HepG2 (cell line): ENCODE measurements at regions of chr6 and their contacts with region 1.

Region 1: DNA sequence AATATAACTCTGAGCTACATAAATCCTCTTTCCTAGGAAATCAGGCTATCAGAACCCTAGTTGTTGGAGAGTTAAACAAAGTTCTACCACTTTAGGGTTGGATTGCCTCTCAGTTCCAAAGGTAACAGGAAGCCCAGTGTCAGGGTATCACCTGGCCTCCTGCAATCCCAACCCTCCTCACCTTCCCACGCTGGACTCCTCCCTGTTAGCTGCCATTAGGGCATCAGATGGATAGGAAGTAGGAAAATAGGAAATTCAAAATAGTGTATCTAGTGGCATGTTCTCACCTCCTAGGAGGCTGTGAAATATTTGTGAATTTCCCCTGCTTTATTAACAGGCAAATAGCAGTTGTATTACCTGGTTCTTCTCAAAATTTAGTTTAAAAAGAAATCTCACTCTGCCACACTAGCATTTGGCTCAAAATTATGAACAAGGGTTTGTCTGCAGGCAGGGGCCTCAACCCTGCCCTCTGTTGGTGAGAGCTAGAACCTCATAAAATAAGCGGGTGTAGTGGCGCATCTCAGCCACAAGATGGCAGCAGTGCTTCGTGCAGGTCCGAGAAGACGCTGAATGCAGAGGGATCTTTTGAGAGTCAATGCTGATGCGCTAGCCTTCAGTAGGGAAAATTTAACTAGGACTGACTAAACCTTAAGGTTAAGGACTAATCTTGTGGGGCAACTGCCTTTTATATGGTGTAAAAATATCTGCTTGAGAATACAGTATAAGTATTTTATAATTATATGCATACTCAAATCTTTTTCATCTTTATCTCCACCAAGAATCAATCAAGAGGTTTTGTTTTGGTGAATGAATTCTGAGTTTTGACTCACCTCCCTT is 209.8 kb upstream of the KCNQ5 start:
- DNase-seq: peak; percentile 44
- ATAC-seq: peak; percentile 45
- H3K4me3 ChIP-seq: no peak overlapping the region
- H3K27ac ChIP-seq: no peak overlapping the region
- H3K4me1 ChIP-seq: peaks cover 14% of the 10 kb centered on the region
- H3K27me3 ChIP-seq: no peaks in the 10 kb centered on the region
- CTCF ChIP-seq: peak; percentile 97
- EP300 ChIP-seq: no peak
- POLR2A ChIP-seq: no peak
- RAD21 ChIP-seq: peak; percentile 92

Region 2: GRCh38 chr6:70955441-70956190 is 1456.5 kb before region 1 on chr6:
- CTCF ChIA-PET with region 1: no interaction called
- POLR2A ChIA-PET with region 1: no interaction called
- in situ Hi-C with region 1: no loop called
- intact Hi-C with region 1: no loop called
- DNase-seq: peak; percentile 64
- ATAC-seq: peak; percentile 97
- H3K4me3 ChIP-seq: peak overlapping the region; percentile 41 to 66 (median 53)
- H3K27ac ChIP-seq: no peak overlapping the region
- H3K4me1 ChIP-seq: peaks cover 12% of the 10 kb centered on the region
- H3K27me3 ChIP-seq: peaks cover 0 to 36% of the 10 kb centered on the region in 2 experiments; a peak in 4 of 5 replicates
- CTCF ChIP-seq: peak; percentile 94
- EP300 ChIP-seq: no peak
- POLR2A ChIP-seq: no peak
- RAD21 ChIP-seq: peak; percentile 90

Region 3: DNA sequence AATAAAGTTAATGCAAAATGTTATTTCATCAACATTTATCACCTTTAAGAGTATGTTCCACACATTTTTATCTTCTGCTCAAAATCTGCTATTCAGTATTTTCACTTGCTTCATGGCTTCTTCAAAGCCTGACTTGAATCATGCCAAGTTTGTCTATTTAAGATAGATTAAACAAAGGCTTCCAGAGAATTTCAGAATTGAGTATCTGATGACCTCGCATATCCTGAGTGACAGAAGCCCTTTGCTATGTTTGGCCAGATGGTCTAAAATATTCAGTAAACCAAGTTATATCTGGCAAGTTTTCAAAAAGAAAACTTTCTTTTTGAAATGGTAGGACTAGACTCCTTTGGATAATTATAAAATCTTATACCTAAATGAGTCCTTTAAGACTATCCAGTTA is 139.1 kb before region 1 on chr6:
- CTCF ChIA-PET with region 1: no interaction called
- POLR2A ChIA-PET with region 1: no interaction called
- in situ Hi-C with region 1: no loop called
- intact Hi-C with region 1: no loop called
- DNase-seq: no peak
- ATAC-seq: no peak
- H3K4me3 ChIP-seq: no peak overlapping the region
- H3K27ac ChIP-seq: no peak overlapping the region
- H3K4me1 ChIP-seq: no peaks in the 10 kb centered on the region
- H3K27me3 ChIP-seq: no peaks in the 10 kb centered on the region
- CTCF ChIP-seq: no peak
- EP300 ChIP-seq: no peak
- POLR2A ChIP-seq: no peak
- RAD21 ChIP-seq: no peak

Region 4: DNA sequence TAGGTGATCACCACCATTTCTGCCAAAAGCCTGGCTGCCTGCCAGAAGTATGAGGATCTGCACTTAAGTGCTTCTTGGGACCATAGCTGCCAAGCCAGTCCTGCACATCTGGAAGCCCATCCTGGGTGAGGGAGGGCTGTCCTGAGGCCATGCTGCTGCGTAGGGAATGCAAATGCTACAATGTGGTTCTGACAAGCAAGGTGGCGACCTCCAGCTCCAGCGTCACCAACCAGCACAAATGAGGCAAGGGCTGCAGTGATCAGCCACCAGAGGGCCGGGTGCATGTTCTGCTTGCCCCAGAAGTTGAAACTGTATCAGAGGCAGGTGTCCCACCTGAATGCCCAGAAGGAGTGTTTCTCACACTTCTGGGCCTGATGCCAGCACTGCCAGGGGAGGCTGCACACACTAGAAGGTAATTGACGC is 110.6 kb after region 1 on chr6:
- CTCF ChIA-PET with region 1: no interaction called
- POLR2A ChIA-PET with region 1: no interaction called
- in situ Hi-C with region 1: no loop called
- intact Hi-C with region 1: loop called (anchors 5 kb)
- DNase-seq: peak; percentile 9
- ATAC-seq: peak; percentile 91
- H3K4me3 ChIP-seq: no peak overlapping the region
- H3K27ac ChIP-seq: no peak overlapping the region
- H3K4me1 ChIP-seq: no peaks in the 10 kb centered on the region
- H3K27me3 ChIP-seq: no peaks in the 10 kb centered on the region
- CTCF ChIP-seq: peak; percentile 41
- EP300 ChIP-seq: no peak
- POLR2A ChIP-seq: no peak
- RAD21 ChIP-seq: no peak

Region 5: DNA sequence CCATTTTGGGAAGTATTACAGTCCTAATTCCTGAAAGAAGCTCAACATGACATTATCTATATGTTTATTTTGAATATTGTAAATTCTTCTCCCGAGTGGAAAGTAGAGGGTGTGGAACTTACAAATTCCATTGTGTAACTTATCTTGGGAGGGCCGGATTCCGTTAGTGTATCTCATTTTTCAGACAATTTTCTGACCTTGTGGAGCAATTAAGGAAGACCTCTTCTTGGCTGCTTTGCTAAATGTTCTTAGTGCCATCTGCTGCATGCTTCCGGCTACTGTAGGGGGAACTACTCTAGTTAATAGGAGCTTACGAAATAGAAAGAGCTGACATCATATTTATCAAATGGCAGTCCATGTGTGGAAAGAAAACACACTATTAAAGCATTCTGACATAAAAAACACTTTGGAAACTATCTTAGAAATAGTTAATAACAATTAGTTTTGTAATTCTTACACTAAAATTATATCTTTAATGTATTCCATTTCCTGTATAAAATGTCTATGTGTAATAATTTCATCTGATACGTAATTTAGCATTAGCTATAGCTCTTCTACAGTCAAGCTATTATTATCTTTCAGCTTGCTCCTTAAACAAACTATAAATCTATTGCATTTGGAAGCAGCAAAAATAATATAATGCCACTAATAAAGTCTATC is 168.3 kb after region 1 on chr6:
- CTCF ChIA-PET with region 1: interaction called, 10 read pairs
- POLR2A ChIA-PET with region 1: no interaction called
- in situ Hi-C with region 1: loop called (anchors 10 kb)
- intact Hi-C with region 1: loop called (anchors 5 kb)
- DNase-seq: peak; percentile 9
- ATAC-seq: 0 out of 3 replicates have a peak, but pooled peaks have one; percentile 37
- H3K4me3 ChIP-seq: no peak overlapping the region
- H3K27ac ChIP-seq: no peak overlapping the region
- H3K4me1 ChIP-seq: no peaks in the 10 kb centered on the region
- H3K27me3 ChIP-seq: no peaks in the 10 kb centered on the region
- CTCF ChIP-seq: peak; percentile 28; the same call in 1 of the 2 replicates
- EP300 ChIP-seq: no peak
- POLR2A ChIP-seq: no peak
- RAD21 ChIP-seq: no peak

Region 6: GRCh38 chr6:73129653-73130443 is 717.8 kb after region 1 on chr6:
- CTCF ChIA-PET with region 1: interaction called, 27 read pairs
- POLR2A ChIA-PET with region 1: no interaction called
- in situ Hi-C with region 1: loop called (anchors 10 kb)
- intact Hi-C with region 1: loop called (anchors 1 kb)
- DNase-seq: peak; percentile 53
- ATAC-seq: peak; percentile 100
- H3K4me3 ChIP-seq: no peak overlapping the region
- H3K27ac ChIP-seq: no peak overlapping the region
- H3K4me1 ChIP-seq: no peaks in the 10 kb centered on the region
- H3K27me3 ChIP-seq: no peaks in the 10 kb centered on the region
- CTCF ChIP-seq: peak; percentile 92
- EP300 ChIP-seq: no peak
- POLR2A ChIP-seq: no peak
- RAD21 ChIP-seq: peak; percentile 72

Region 7: GRCh38 chr6:73180763-73181619 is 768.9 kb after region 1 on chr6:
- CTCF ChIA-PET with region 1: interaction called, 11 read pairs
- POLR2A ChIA-PET with region 1: no interaction called
- in situ Hi-C with region 1: no loop called
- intact Hi-C with region 1: loop called (anchors 1 kb)
- DNase-seq: peak; percentile 39
- ATAC-seq: peak; percentile 88
- H3K4me3 ChIP-seq: no peak overlapping the region
- H3K27ac ChIP-seq: no peak overlapping the region
- H3K4me1 ChIP-seq: no peaks in the 10 kb centered on the region
- H3K27me3 ChIP-seq: no peaks in the 10 kb centered on the region
- CTCF ChIP-seq: peak; percentile 62
- EP300 ChIP-seq: no peak
- POLR2A ChIP-seq: no peak
- RAD21 ChIP-seq: no peak

Region 8: DNA sequence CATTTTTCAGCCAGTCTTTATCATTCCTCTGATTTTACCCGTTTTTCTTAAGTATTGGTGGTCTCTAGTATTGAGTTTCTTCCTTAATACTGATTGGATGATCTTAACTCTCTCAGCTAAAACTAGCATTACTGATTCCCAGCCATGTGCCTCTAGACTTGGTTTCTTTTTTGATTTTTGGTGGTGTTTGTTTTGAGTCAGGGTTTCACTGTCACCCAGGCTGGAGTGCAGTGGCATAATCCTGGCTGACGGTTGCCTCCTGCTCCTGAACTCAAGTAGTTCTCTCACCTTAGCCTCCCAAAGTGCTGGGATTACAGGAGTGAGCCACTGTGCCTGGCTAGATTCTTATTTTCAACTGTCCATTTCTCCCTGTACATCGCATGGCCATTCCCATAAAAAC is 917.1 kb after region 1 on chr6:
- CTCF ChIA-PET with region 1: interaction called, 12 read pairs
- POLR2A ChIA-PET with region 1: no interaction called
- in situ Hi-C with region 1: no loop called
- intact Hi-C with region 1: no loop called
- DNase-seq: no peak
- ATAC-seq: no peak
- H3K4me3 ChIP-seq: no peak overlapping the region
- H3K27ac ChIP-seq: no peak overlapping the region
- H3K4me1 ChIP-seq: no peaks in the 10 kb centered on the region
- H3K27me3 ChIP-seq: peaks cover 0 to 6% of the 10 kb centered on the region in 2 experiments; a peak in 2 of 5 replicates
- CTCF ChIP-seq: no peak
- EP300 ChIP-seq: no peak
- POLR2A ChIP-seq: no peak
- RAD21 ChIP-seq: no peak